Aorta (tissue), 5 donors: ENCODE measurements at regions of chr17 and their contacts with region 1.

Region 1: DNA sequence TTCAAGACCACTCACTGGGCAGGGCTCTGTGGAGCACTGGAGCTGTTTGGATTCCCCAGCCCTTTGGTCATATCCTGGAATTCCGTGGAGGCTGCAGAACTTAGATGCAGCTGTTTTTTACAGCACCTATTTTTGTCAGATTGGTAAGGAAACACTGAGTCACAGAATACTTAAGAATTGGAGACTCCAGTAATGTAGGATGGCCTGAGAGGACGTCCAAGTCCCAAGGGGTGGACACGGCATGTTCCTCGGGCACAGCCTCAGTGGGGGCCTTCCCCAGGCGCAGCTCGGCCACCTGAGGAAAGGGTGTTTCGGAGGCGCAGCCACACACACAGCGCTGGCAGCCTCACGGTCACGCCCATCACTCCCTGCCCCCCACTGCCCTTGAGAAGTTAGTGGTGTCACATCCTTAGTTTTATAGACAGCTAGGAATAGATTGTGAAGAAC is 14.8 kb downstream of the PLD6 start:
- DNase-seq: peak; percentile 71 to 86
- ATAC-seq: peak; percentile 84
- H3K4me3 ChIP-seq: no peak overlapping the region
- H3K27ac ChIP-seq: peak overlapping the region in 1 of 2 donors; percentile 65
- H3K4me1 ChIP-seq: peaks cover 3 to 11% of the 10 kb centered on the region in 2 donors
- H3K27me3 ChIP-seq: no peaks in the 10 kb centered on the region

Region 2: GRCh38 chr17:17206124-17206912 is 14.9 kb after region 1 on chr17 and contains the start of gene PLD6:
- intact Hi-C with region 1: loop called in 1 of 2 experiments (anchors 2 kb)
- DNase-seq: peak; percentile 77 to 93
- ATAC-seq: peak; percentile 81
- H3K4me3 ChIP-seq: peak within 1 kb of the TSS in 1 of 2 donors; percentile 18
- H3K27ac ChIP-seq: peak within 1 kb of the TSS; percentile 24 to 53
- H3K4me1 ChIP-seq: no peaks in the 10 kb centered on the region
- H3K27me3 ChIP-seq: no peaks in the 10 kb centered on the region
- total RNA-seq, gene PLD6: 1.3 to 1.8 TPM